ENCODE measurements at regions of chrX and their contacts with region 1.

Region 1: DNA sequence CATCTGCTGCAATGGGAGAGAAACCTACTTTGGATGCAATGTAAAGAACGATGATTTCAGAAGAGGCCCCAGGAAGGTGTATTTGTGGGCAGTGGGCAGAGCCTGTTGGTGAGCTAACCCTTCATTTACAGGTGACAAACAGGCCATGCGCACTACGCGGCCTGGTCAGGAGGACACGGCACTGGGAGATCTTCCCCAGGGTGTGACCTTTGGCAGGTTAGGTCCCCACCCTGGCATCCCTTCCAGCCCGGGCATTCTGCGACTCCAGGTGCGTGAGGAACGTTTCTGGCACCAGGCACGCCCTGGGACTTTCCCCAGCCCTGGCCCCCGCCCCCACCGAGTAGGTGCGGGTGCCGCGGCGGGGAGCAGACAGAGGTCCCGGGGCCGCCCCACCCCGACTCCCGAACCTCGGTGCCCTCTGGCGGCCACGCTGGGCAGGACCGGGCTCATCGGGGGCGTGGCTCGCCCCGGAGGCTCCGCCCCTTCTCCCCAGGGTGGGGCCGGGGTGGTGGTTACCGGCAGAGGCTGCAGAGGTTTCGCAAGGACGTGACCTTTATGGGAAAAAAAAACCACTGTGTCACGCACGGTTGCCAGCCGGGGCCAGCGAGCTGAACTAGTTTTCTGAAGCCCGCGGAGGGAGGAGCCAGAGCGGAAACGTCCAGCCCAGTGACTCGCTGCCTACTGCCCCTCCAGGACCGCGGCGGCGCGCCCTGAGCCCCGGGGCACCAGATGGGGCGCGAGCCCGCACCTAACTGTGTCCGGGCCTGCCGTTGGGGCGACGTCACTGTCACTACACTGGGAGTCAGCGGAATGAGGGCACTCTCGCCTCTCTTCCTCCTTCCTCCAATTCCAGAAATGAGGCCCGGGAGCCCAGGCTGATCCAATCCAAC is 5.0 kb upstream of the NYX start:
- DNase-seq: peak; percentile 87
- ATAC-seq: peak; percentile 92
- H3K4me3 Mint-ChIP-seq: peak overlapping the region; percentile 73
- H3K27ac Mint-ChIP-seq: peak overlapping the region; percentile 53
- H3K4me1 Mint-ChIP-seq: peaks cover 25% of the 10 kb centered on the region
- H3K27me3 Mint-ChIP-seq: no peaks in the 10 kb centered on the region
- CTCF ChIP-seq: no peak

Region 2: GRCh38 chrX:41391606-41392005 is 50.6 kb before region 1 on chrX:
- CTCF ChIA-PET with region 1: no interaction called
- POLR2A ChIA-PET with region 1: no interaction called
- intact Hi-C with region 1: no loop called
- DNase-seq: no peak
- ATAC-seq: no peak
- H3K4me3 Mint-ChIP-seq: no peak overlapping the region
- H3K27ac Mint-ChIP-seq: no peak overlapping the region
- H3K4me1 Mint-ChIP-seq: no peaks in the 10 kb centered on the region
- H3K27me3 Mint-ChIP-seq: no peaks in the 10 kb centered on the region
- CTCF ChIP-seq: no peak

Region 3: DNA sequence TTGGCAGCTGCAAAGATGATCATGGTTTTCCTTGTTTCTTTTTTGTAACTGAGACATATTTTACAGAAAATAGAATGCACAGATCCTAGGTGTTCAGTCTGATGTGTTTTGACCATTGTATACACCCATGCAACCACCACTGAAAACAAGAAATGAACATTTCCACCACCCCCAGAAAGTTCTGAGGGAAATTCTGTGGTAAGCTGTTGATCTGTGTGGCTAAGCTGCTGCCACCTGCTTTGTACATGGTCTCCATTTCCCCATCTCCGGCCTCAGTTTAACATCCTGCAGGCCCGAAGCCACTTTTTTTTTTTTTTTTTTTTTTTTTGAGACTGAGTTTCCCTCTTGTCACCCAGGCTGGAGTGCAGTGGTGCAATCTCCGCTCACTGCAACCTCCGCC is 70.2 kb after region 1 on chrX:
- CTCF ChIA-PET with region 1: no interaction called
- POLR2A ChIA-PET with region 1: no interaction called
- intact Hi-C with region 1: loop called (anchors 5 kb)
- DNase-seq: no peak
- ATAC-seq: peak; percentile 14
- H3K4me3 Mint-ChIP-seq: no peak overlapping the region
- H3K27ac Mint-ChIP-seq: no peak overlapping the region
- H3K4me1 Mint-ChIP-seq: peaks cover 15% of the 10 kb centered on the region
- H3K27me3 Mint-ChIP-seq: no peaks in the 10 kb centered on the region
- CTCF ChIP-seq: no peak

Region 4: GRCh38 chrX:42375086-42375485 is 932.9 kb after region 1 on chrX:
- CTCF ChIA-PET with region 1: no interaction called
- POLR2A ChIA-PET with region 1: no interaction called
- intact Hi-C with region 1: no loop called
- DNase-seq: no peak
- ATAC-seq: no peak
- H3K4me3 Mint-ChIP-seq: no peak overlapping the region
- H3K27ac Mint-ChIP-seq: no peak overlapping the region
- H3K4me1 Mint-ChIP-seq: no peaks in the 10 kb centered on the region
- H3K27me3 Mint-ChIP-seq: no peaks in the 10 kb centered on the region
- CTCF ChIP-seq: no peak

Measured in activated B cell treated with CpG ODN at 0.5 μM for 24 hours (primary cell).